ENCODE measurements at regions of chr15 and their contacts with region 1.

Region 1: GRCh38 chr15:45457641-45458433 is 64.7 kb downstream of the SLC30A4 start:
- DNase-seq: peak in 1 of 2 donors; percentile 82
- ATAC-seq: peak; percentile 63 to 90 (median 82)
- H3K4me3 ChIP-seq: peak overlapping the region; percentile 12 to 72 (median 52)
- H3K27ac ChIP-seq: peak overlapping the region in 9 of 10 donors; percentile 33 to 83 (median 71)
- H3K4me1 ChIP-seq: peaks cover 0 to 52% (median 0%) of the 10 kb centered on the region in 9 donors
- H3K27me3 ChIP-seq: no peaks in the 10 kb centered on the region
- CTCF ChIP-seq: peak; percentile 60 to 82 (median 76)

Region 2: GRCh38 chr15:45198337-45199135 is 259.3 kb before region 1 on chr15:
- intact Hi-C with region 1: loop called in 1 of 10 experiments (anchors 5 kb)
- DNase-seq: peak; percentile 86 to 98
- ATAC-seq: peak; percentile 79 to 89 (median 84)
- H3K4me3 ChIP-seq: peak overlapping the region; percentile 30 to 80 (median 72)
- H3K27ac ChIP-seq: peak overlapping the region; percentile 85 to 99 (median 96)
- H3K4me1 ChIP-seq: peaks cover 0 to 45% (median 9%) of the 10 kb centered on the region in 9 donors
- H3K27me3 ChIP-seq: no peaks in the 10 kb centered on the region
- CTCF ChIP-seq: peak; percentile 39 to 90 (median 70)

Region 3: GRCh38 chr15:45429974-45430792 is 27.7 kb before region 1 on chr15:
- intact Hi-C with region 1: loop called in 5 of 10 experiments (anchors 1 to 2 kb)
- DNase-seq: peak; percentile 42 to 79
- ATAC-seq: peak; percentile 57 to 87 (median 68)
- H3K4me3 ChIP-seq: peak overlapping the region in 9 of 10 donors; percentile 4 to 53 (median 48)
- H3K27ac ChIP-seq: peak overlapping the region in 1 of 10 donors; percentile 41
- H3K4me1 ChIP-seq: peaks cover 0 to 10% (median 6%) of the 10 kb centered on the region in 9 donors
- H3K27me3 ChIP-seq: peaks cover 0 to 9% (median 7%) of the 10 kb centered on the region in 7 donors
- CTCF ChIP-seq: peak; percentile 90 to 100 (median 96)

Region 4: DNA sequence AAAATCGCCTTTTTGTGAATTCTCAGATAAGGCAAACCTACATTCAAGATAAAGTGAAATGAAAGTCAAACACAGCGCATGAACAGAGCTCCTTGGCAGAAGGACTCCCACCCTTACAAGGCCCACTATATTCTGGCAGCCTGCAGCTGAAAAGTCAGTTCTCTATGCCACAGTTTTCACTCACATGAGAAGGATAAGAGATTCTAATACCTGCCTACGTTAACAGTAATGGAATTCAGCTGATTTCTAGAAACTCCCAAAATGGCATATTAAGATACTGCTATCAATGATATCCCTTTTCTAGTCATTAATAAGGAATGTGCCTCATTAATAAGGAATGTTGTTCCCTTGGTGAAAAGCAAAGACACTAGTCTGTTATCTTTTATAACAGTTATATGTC is 37.8 kb after region 1 on chr15:
- intact Hi-C with region 1: no loop called
- DNase-seq: no peak
- ATAC-seq: no peak
- H3K4me3 ChIP-seq: no peak overlapping the region
- H3K27ac ChIP-seq: no peak overlapping the region
- H3K4me1 ChIP-seq: no peaks in the 10 kb centered on the region
- H3K27me3 ChIP-seq: no peaks in the 10 kb centered on the region
- CTCF ChIP-seq: no peak

Region 5: GRCh38 chr15:45611305-45611704 is 153.5 kb after region 1 on chr15:
- intact Hi-C with region 1: loop called in 9 of 10 experiments (anchors 1 to 5 kb)
- DNase-seq: no peak
- ATAC-seq: no peak
- H3K4me3 ChIP-seq: no peak overlapping the region
- H3K27ac ChIP-seq: no peak overlapping the region
- H3K4me1 ChIP-seq: peaks cover 0 to 11% (median 0%) of the 10 kb centered on the region in 9 donors
- H3K27me3 ChIP-seq: no peaks in the 10 kb centered on the region
- CTCF ChIP-seq: peak in 6 of 9 donors; percentile 31 to 54 (median 46)